GM12878 (cell line): ENCODE measurements at regions of chr2 and their contacts with region 1.

Region 1: GRCh38 chr2:204060841-204061240 is 124.3 kb downstream of the ICOS start:
- DNase-seq: no peak
- ATAC-seq: no peak
- H3K4me3 ChIP-seq: no peak overlapping the region
- H3K27ac ChIP-seq: no peak overlapping the region
- H3K4me1 ChIP-seq: no peaks in the 10 kb centered on the region
- H3K27me3 ChIP-seq: 0 out of 4 replicates have a peak, but pooled peaks cover 0 to 1% of the 10 kb centered on the region in 2 experiments
- CTCF ChIP-seq: no peak
- EP300 ChIP-seq: no peak
- POLR2A ChIP-seq: no peak
- RAD21 ChIP-seq: no peak

Region 2: GRCh38 chr2:204072443-204073324 is 11.8 kb after region 1 on chr2:
- CTCF ChIA-PET with region 1: interaction called, 11 read pairs
- POLR2A ChIA-PET with region 1: no interaction called
- RAD21 ChIA-PET with region 1: no interaction called
- SMC1A ChIA-PET with region 1: no interaction called
- in situ Hi-C with region 1: no loop called
- intact Hi-C with region 1: no loop called
- DNase-seq: no peak
- ATAC-seq: peak; percentile 76
- H3K4me3 ChIP-seq: no peak overlapping the region
- H3K27ac ChIP-seq: no peak overlapping the region
- H3K4me1 ChIP-seq: no peaks in the 10 kb centered on the region
- H3K27me3 ChIP-seq: peaks cover 0 to 2% of the 10 kb centered on the region in 2 experiments; a peak in 1 of 4 replicates
- CTCF ChIP-seq: peak; percentile 47 to 60 (median 52)
- EP300 ChIP-seq: no peak
- POLR2A ChIP-seq: no peak
- RAD21 ChIP-seq: peak; percentile 56